ENCODE measurements at regions of chr17 and their contacts with region 1.

Region 1: DNA sequence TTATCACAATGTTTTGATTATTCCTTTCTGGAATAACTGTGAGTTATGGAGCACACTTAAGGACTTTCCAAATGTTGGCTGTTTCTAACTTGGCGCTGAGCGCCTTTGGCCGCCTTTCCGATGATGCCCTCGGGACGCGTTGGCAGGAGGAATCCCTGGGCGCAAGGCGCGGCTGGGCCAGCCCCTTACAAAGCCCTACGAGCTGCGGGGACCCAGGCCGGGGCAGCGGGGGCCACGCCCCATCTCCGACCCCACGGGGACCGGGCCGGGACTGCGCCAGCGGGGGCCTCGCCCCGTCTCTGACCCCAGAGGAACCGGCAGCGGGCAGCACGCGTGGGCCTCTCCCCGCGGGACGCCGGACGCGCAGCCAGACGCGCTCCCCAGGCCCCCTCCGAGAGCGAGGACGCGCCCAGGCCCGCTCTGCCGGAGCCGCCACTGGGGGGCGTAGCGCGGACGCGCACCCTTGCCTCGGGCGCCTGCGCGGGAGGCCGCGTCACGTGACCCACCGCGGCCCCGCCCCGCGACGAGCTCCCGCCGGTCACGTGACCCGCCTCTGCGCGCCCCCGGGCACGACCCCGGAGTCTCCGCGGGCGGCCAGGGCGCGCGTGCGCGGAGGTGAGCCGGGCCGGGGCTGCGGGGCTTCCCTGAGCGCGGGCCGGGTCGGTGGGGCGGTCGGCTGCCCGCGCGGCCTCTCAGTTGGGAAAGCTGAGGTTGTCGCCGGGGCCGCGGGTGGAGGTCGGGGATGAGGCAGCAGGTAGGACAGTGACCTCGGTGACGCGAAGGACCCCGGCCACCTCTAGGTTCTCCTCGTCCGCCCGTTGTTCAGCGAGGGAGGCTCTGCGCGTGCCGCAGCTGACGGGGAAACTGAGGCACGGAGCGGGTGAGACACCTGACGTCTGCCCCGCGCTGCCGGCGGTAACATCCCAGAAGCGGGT is at the start of gene GAA:
- DNase-seq: peak; percentile 97
- H3K4me3 ChIP-seq: peak within 1 kb of the TSS; percentile 75
- H3K27ac ChIP-seq: no peak within 1 kb of the TSS
- H3K4me1 ChIP-seq: peaks cover 22% of the 10 kb centered on the region
- CTCF ChIP-seq: peak; percentile 84
- total RNA-seq, gene GAA: 34.8 and 43.2 TPM in 2 replicates

Region 2: DNA sequence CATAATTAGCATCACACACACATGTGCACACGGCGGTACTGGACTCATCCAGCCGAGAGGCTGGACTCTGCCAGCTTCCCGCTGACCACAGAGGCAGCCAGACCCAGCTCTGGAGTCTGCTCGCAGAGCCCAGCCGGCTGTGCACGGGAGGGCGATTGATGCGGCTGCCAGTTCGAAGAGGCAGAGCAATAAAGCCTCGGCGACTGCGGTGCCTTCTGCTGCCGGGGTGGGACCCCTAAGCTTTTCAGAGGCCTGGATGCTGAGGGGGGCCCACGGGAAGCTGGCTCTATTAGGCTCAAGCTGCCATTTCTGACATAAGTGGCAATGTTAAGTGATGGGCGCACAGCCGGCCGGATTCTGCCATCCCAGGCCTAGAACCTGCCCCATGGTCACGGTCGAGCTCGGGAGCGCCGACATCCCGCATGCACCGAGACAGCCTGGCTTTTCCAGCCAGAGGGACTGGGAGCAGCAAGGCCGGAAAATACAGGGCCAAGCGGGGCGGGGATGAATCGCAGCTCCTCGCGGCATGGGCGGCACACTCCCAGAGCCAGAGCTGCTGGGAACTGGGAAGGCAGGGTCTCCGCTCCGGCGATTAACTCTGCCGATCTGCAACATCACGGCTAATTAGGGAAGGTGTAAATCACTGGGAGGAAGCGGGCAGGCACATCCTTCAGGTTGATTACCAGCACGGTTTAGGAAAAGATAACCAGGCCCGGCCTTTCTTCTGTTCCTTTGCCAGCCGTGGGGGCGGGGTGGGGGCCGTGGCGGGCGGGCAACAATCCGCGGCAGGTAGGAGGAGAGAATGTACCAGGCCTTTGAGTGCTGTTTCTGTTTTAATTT is 123.3 kb before region 1 on chr17:
- CTCF ChIA-PET with region 1: no interaction called
- POLR2A ChIA-PET with region 1: no interaction called
- intact Hi-C with region 1: no loop called
- DNase-seq: no peak
- H3K4me3 ChIP-seq: no peak overlapping the region
- H3K27ac ChIP-seq: no peak overlapping the region
- H3K4me1 ChIP-seq: no peaks in the 10 kb centered on the region
- CTCF ChIP-seq: no peak

Region 3: GRCh38 chr17:80147035-80147836 is 46.0 kb after region 1 on chr17 and contains the start of gene EIF4A3:
- CTCF ChIA-PET with region 1: interaction called, 3 read pairs
- POLR2A ChIA-PET with region 1: interaction called, 4 read pairs
- intact Hi-C with region 1: loop called (anchors 5 kb)
- DNase-seq: peak; percentile 100
- H3K4me3 ChIP-seq: peak within 1 kb of the TSS; percentile 93
- H3K27ac ChIP-seq: peak within 1 kb of the TSS; percentile 67
- H3K4me1 ChIP-seq: peaks cover 37% of the 10 kb centered on the region
- CTCF ChIP-seq: no peak
- total RNA-seq, gene EIF4A3: 312 and 313 TPM in 2 replicates

Region 4: GRCh38 chr17:80252607-80253289 is 151.5 kb after region 1 on chr17:
- CTCF ChIA-PET with region 1: no interaction called
- POLR2A ChIA-PET with region 1: no interaction called
- intact Hi-C with region 1: loop called (anchors 2 kb)
- DNase-seq: peak; percentile 84
- H3K4me3 ChIP-seq: no peak overlapping the region
- H3K27ac ChIP-seq: no peak overlapping the region
- H3K4me1 ChIP-seq: peaks cover 14% of the 10 kb centered on the region
- CTCF ChIP-seq: peak; percentile 96

Region 5: DNA sequence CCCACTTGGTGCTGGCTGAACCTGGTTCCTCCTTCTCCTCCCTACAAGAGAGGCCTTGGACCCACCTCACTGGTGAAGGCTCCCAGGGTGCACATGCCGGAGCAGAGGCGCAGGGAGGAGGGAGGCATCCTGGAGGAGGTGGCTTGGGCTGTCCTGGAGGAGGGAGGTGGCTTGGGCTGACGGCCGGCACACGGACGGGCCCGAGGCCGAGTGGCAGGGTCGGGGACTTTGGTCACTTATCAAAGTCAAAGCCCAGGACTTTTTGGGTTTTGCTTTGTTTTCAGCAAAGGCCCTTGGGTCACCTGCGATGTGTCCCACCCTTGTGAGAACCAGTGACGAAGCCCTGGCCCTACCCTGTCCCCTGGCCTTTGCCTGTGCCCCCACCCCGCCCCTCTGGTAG is 342.2 kb after region 1 on chr17:
- CTCF ChIA-PET with region 1: interaction called, 10 read pairs
- POLR2A ChIA-PET with region 1: no interaction called
- intact Hi-C with region 1: no loop called
- DNase-seq: no peak
- H3K4me3 ChIP-seq: no peak overlapping the region
- H3K27ac ChIP-seq: no peak overlapping the region
- H3K4me1 ChIP-seq: no peaks in the 10 kb centered on the region
- CTCF ChIP-seq: no peak